GM10248 (cell line): ENCODE measurements at regions of chr3 and their contacts with region 1.

Region 1: GRCh38 chr3:45958321-45958791 is 15.1 kb downstream of the CXCR6 start:
- DNase-seq: no peak
- CTCF ChIP-seq: no peak

Region 2: DNA sequence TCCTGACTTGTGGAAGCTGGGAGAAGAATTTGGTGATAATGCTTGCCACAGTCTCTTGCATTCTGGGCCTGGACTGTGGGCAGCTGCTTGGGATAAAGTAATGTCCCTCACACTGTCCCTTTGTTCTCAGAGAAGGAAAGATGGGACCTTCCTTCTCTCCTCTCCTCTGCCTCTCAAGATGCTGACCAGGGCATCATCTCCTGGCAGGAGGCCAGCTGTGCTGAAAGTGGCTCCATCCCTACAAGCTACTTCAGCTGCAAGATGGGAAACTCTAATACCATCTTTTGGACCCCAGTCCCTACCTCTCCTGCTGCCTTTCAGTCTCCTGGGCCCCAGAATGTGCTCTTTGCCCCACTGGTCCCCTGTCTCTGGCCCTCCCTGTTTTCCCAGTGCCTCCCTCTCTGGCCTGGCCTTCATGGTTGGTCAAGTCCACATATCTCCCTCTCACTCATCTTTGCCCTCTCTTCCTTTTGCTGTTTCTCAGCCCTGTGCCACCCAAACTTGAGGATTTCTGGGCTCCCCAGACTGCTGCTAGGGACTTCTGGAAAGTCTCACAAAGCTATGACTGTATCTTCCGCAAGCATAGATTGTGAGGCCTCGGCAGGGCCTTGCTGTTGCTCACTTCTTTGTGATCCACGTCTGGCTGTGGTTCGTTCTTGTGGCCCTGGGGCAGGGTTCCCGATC is 155.0 kb before region 1 on chr3:
- CTCF ChIA-PET with region 1: no interaction called
- POLR2A ChIA-PET with region 1: no interaction called
- DNase-seq: no peak
- CTCF ChIP-seq: no peak

Region 3: DNA sequence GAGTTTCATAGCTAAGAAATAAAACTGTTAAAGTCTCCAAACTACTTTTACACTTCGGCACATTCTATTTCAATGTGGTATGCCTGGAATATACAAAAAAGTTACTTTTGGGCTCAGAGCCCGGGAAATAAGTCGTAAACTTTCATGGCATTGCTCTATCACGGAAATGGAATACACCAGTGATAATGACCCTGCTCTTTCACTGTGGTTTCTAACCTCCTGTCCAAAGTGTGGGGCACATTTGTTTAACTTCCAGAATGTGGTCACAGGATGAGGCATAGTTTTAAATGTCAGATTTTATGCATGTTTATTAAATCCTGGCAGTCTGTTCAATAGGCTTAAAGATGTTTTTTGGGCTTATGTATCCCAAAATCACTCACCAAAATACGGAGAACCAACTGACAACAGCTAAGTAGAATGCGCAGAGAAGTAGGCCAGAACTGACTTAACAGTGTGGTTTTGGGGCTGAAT is 10.0 kb before region 1 on chr3:
- CTCF ChIA-PET with region 1: interaction called, 13 read pairs
- POLR2A ChIA-PET with region 1: no interaction called
- DNase-seq: no peak
- CTCF ChIP-seq: no peak